PC-9 (cell line): ENCODE measurements at regions of chr19 and their contacts with region 1.

Region 1: GRCh38 chr19:55391702-55392615 is 6.2 kb downstream of the RPL28 start:
- DNase-seq: no peak
- H3K4me3 ChIP-seq: no peak overlapping the region
- H3K27ac ChIP-seq: no peak overlapping the region
- H3K4me1 ChIP-seq: peaks cover 20% of the 10 kb centered on the region
- H3K27me3 ChIP-seq: no peaks in the 10 kb centered on the region
- CTCF ChIP-seq: no peak

Region 2: GRCh38 chr19:55362990-55363716 is 28.8 kb before region 1 on chr19 and contains the start of gene GARIN5B:
- CTCF ChIA-PET with region 1: no interaction called
- POLR2A ChIA-PET with region 1: interaction called, 10 read pairs
- intact Hi-C with region 1: no loop called
- DNase-seq: no peak
- H3K4me3 ChIP-seq: no peak within 1 kb of the TSS
- H3K27ac ChIP-seq: no peak within 1 kb of the TSS
- H3K4me1 ChIP-seq: no peaks in the 10 kb centered on the region
- H3K27me3 ChIP-seq: no peaks in the 10 kb centered on the region
- CTCF ChIP-seq: no peak
- total RNA-seq, gene GARIN5B: 0.11 TPM in 1 of 2 replicates, not detected in the other

Region 3: GRCh38 chr19:55369671-55370304 is 22.2 kb before region 1 on chr19:
- CTCF ChIA-PET with region 1: no interaction called
- POLR2A ChIA-PET with region 1: interaction called, 12 read pairs
- intact Hi-C with region 1: no loop called
- DNase-seq: peak in 1 of 2 experiments; percentile 60
- H3K4me3 ChIP-seq: peak overlapping the region; percentile 62
- H3K27ac ChIP-seq: no peak overlapping the region
- H3K4me1 ChIP-seq: peaks cover 42% of the 10 kb centered on the region
- H3K27me3 ChIP-seq: peaks cover 5% of the 10 kb centered on the region; the same call in 1 of the 2 replicates
- CTCF ChIP-seq: no peak